ENCODE measurements at regions of chr1 and their contacts with region 1.

Region 1: DNA sequence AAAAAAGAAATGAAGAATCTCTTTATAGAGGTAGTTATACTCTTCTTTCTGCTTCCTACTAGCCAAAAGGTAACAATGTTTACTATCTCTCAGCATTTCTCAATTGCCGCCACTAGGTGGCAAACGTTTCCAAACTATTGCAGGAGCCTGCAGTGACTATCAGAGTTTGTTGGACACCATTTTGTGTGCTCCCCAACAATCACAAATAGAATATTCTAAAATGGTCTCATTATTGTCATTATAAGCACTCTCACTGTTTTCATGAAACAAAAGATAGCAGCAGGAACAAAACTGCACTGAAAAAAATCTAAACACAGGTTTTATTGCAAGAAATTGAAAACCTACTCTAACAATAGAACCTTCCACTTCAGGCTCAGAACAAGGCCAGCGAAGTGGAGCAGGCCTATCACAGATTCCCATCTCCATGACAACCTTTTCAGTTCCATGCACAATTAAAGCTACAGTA is 83.9 kb upstream of the PLPPR4 start:
- DNase-seq: peak; percentile 17 to 83
- ATAC-seq: peak; percentile 80 to 96 (median 94)
- H3K4me3 ChIP-seq: no peak overlapping the region
- H3K27ac ChIP-seq: peak overlapping the region in 3 of 10 donors; percentile 26 to 71 (median 58)
- H3K4me1 ChIP-seq: peaks cover 0 to 10% (median 8%) of the 10 kb centered on the region in 9 donors
- H3K27me3 ChIP-seq: no peaks in the 10 kb centered on the region
- CTCF ChIP-seq: peak; percentile 52 to 94 (median 82)

Region 2: GRCh38 chr1:99472893-99473292 is 292.5 kb after region 1 on chr1:
- intact Hi-C with region 1: loop called in 1 of 10 experiments (anchors 5 kb)
- DNase-seq: no peak
- ATAC-seq: no peak
- H3K4me3 ChIP-seq: no peak overlapping the region
- H3K27ac ChIP-seq: no peak overlapping the region
- H3K4me1 ChIP-seq: no peaks in the 10 kb centered on the region
- H3K27me3 ChIP-seq: no peaks in the 10 kb centered on the region
- CTCF ChIP-seq: no peak

Region 3: GRCh38 chr1:99481391-99481996 is 301.1 kb after region 1 on chr1:
- intact Hi-C with region 1: loop called (anchors 1 to 10 kb)
- DNase-seq: peak in 1 of 2 donors; percentile 71
- ATAC-seq: peak in 7 of 8 donors; percentile 52 to 76 (median 67)
- H3K4me3 ChIP-seq: no peak overlapping the region
- H3K27ac ChIP-seq: no peak overlapping the region
- H3K4me1 ChIP-seq: peaks cover 0 to 4% (median 0%) of the 10 kb centered on the region in 9 donors
- H3K27me3 ChIP-seq: no peaks in the 10 kb centered on the region
- CTCF ChIP-seq: peak; percentile 56 to 91 (median 81)

Region 4: DNA sequence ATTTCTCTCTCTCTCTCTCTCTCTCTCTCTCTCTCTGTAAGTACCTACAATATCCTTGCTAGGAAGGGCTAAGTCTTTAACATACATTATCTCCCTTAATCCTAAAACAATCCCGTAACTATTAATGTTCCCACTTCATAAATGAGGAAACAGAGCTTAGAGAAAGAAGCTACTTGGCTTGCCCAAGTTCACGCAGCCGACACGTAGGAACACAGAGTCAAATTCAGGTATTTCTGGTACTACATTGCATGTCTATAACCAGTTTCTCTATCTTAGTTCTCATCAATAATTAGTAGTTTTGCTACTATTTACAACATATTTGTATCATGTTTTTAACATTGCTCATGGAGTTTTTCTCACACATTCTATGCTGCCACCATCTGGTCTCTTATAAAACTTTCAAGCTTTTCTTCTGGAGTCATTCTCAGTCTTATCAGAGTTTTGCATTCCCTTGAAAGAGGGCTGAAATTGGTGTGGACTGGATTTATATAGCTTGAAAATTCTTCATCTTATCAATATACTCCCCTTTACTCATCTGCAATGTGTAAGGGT is 346.6 kb after region 1 on chr1:
- intact Hi-C with region 1: loop called in 1 of 10 experiments (anchors 5 kb)
- DNase-seq: no peak
- ATAC-seq: peak in 3 of 8 donors; percentile 28 to 56 (median 44)
- H3K4me3 ChIP-seq: no peak overlapping the region
- H3K27ac ChIP-seq: no peak overlapping the region
- H3K4me1 ChIP-seq: peaks cover 0 to 20% (median 9%) of the 10 kb centered on the region in 9 donors
- H3K27me3 ChIP-seq: no peaks in the 10 kb centered on the region
- CTCF ChIP-seq: peak in 7 of 9 donors; percentile 36 to 69 (median 47)

Region 5: GRCh38 chr1:99707535-99708142 is 527.3 kb after region 1 on chr1:
- intact Hi-C with region 1: loop called (anchors 1 to 5 kb)
- DNase-seq: peak; percentile 21 to 66
- ATAC-seq: peak in 7 of 8 donors; percentile 63 to 85 (median 81)
- H3K4me3 ChIP-seq: no peak overlapping the region
- H3K27ac ChIP-seq: peak overlapping the region in 3 of 10 donors; percentile 11 to 47 (median 38)
- H3K4me1 ChIP-seq: peaks cover 0 to 22% (median 3%) of the 10 kb centered on the region in 9 donors
- H3K27me3 ChIP-seq: no peaks in the 10 kb centered on the region
- CTCF ChIP-seq: peak; percentile 78 to 95 (median 91)

Region 6: DNA sequence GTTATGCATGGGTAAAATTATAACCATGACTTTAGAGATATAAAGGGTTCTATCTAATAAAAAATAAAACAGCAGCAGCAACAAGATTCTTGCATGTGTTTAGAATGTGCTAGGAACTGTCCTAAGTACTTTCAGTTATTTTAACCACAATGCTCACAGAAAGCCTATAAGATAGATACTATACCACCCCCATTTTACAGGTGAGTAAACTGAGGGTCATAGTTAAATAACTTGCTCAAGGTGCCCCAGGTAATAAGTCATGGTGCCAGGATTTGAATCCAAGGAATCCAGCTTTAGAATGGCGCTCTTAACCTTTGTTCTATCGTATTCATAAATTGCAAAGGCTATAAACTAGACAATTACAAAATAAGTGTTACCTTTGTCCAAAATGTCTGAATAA is 532.6 kb after region 1 on chr1:
- intact Hi-C with region 1: loop called in 5 of 10 experiments (anchors 5 kb)
- DNase-seq: no peak
- ATAC-seq: no peak
- H3K4me3 ChIP-seq: no peak overlapping the region
- H3K27ac ChIP-seq: no peak overlapping the region
- H3K4me1 ChIP-seq: no peaks in the 10 kb centered on the region
- H3K27me3 ChIP-seq: no peaks in the 10 kb centered on the region
- CTCF ChIP-seq: no peak

Region 7: DNA sequence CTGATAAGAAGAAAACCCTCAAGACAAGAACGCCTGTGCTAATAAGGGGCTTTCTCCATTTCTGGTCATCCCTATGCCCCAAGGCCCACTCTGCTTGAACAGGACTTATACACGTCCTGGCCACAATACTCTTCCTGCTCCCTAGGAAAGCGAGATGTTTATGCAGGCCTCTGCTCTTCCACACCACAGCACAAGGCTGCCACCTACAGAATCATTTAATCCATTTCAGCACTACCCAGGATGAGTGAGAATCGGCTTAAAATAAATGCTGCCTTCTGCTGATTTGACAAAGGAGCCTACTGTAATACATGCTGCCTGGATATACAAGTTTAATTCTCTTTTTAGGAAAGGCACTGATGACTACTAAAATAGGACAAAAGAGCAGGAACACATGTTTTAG is 556.6 kb after region 1 on chr1:
- intact Hi-C with region 1: loop called in 1 of 10 experiments (anchors 10 kb)
- DNase-seq: peak in 1 of 2 donors; percentile 46
- ATAC-seq: peak; percentile 55 to 96 (median 94)
- H3K4me3 ChIP-seq: no peak overlapping the region
- H3K27ac ChIP-seq: peak overlapping the region in 2 of 10 donors; percentile 11 to 42
- H3K4me1 ChIP-seq: peaks cover 0 to 8% (median 0%) of the 10 kb centered on the region in 9 donors
- H3K27me3 ChIP-seq: no peaks in the 10 kb centered on the region
- CTCF ChIP-seq: peak; percentile 37 to 74 (median 52)

Measured in heart right ventricle (tissue), 16 donors.